Activated naive CD4-positive, alpha-beta T cell treated with anti-CD3 and anti-CD28 coated beads for 36 hours (primary cell): ENCODE measurements at regions of chr11 and their contacts with region 1.

Region 1: DNA sequence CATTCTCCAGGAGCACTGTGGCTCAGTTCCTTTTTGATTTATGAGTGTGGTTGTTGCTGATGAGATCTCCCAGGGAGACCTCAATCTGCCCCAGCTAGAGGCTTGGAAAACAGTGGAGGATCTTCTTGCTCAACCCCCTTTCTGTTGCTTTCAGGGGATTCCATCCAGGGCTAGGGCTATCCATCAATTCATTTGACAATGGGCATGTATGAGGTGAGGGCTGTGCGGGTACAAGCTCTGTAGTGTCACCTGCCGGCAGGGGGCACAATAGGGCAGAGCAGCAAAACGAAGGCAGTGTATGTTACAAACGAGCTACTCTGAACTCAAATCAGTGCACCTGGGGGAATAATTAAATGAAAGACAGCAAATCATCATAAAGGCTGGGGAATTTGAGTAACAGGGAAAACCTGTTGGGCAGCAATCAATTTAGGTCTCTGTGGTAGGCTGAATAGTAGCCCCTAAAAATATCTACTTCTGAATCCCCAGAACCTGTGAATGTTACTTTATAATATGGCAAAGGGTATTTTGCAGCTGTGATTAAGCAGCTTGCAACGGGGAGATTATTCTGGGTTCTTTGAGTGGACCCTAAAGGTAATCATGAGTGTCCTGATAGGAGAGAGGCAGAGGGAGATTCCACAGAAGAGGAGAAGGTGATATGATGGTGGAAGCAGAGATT is 170.3 kb upstream of the ZBED5 start:
- DNase-seq: peak; percentile 88
- H3K4me3 Mint-ChIP-seq: no peak overlapping the region
- H3K27ac Mint-ChIP-seq: no peak overlapping the region
- H3K4me1 Mint-ChIP-seq: no peaks in the 10 kb centered on the region
- H3K27me3 Mint-ChIP-seq: no peaks in the 10 kb centered on the region

Region 2: GRCh38 chr11:11016068-11016467 is 12.1 kb before region 1 on chr11:
- CTCF ChIA-PET with region 1: interaction called, 17 read pairs
- intact Hi-C with region 1: no loop called
- DNase-seq: no peak
- H3K4me3 Mint-ChIP-seq: no peak overlapping the region
- H3K27ac Mint-ChIP-seq: no peak overlapping the region
- H3K4me1 Mint-ChIP-seq: no peaks in the 10 kb centered on the region
- H3K27me3 Mint-ChIP-seq: peaks cover under 1% of the 10 kb centered on the region

Region 3: GRCh38 chr11:11157185-11157584 is 129.0 kb after region 1 on chr11:
- CTCF ChIA-PET with region 1: interaction called, 36 read pairs
- intact Hi-C with region 1: loop called (anchors 1 kb)
- DNase-seq: peak; percentile 66
- H3K4me3 Mint-ChIP-seq: no peak overlapping the region
- H3K27ac Mint-ChIP-seq: no peak overlapping the region
- H3K4me1 Mint-ChIP-seq: peaks cover 28% of the 10 kb centered on the region
- H3K27me3 Mint-ChIP-seq: no peaks in the 10 kb centered on the region

Region 4: GRCh38 chr11:11207428-11207827 is 179.3 kb after region 1 on chr11:
- CTCF ChIA-PET with region 1: no interaction called
- intact Hi-C with region 1: loop called (anchors 2 kb)
- DNase-seq: no peak
- H3K4me3 Mint-ChIP-seq: no peak overlapping the region
- H3K27ac Mint-ChIP-seq: no peak overlapping the region
- H3K4me1 Mint-ChIP-seq: no peaks in the 10 kb centered on the region
- H3K27me3 Mint-ChIP-seq: peaks cover 5% of the 10 kb centered on the region

Region 5: GRCh38 chr11:11265994-11266606 is 237.9 kb after region 1 on chr11:
- CTCF ChIA-PET with region 1: interaction called, 14 read pairs
- intact Hi-C with region 1: loop called (anchors 1 kb)
- DNase-seq: peak; percentile 79
- H3K4me3 Mint-ChIP-seq: no peak overlapping the region
- H3K27ac Mint-ChIP-seq: no peak overlapping the region
- H3K4me1 Mint-ChIP-seq: no peaks in the 10 kb centered on the region
- H3K27me3 Mint-ChIP-seq: no peaks in the 10 kb centered on the region

Region 6: DNA sequence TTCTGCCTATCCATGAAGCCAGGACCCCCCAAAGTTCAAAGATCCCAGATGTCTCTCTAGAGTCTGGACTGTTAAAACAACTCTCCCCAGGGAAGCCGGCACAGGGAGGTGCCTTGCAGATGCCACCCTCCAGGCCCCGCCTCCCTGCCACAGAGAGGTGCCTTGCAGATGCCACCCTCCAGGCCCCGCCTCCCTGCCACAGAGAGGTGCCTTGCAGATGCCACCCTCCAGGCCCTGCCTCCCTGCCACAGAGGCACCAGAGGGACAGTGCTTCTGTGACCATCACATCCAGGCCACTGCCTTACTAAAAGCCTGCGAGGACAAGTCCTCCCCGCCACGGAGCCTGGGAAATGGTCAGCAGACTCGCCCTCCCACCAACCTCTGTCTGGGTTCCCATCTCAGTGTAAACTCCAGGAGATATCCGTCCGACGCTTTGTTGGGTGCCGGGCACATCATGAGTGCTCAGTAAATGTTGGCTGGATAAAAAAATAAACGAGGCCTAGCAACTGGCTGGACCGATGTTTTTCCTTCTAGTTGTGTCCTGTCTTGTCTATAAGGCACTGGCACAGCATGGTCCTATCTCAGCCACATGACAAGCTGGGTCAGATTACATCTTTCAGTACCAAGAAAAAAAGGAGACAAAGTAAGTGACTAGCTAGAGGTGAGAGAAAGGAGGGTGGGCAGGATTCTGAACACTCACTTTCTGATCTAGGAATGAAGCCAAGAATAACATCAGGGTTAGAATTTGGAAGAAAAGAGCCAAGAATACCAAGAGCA is 416.1 kb after region 1 on chr11:
- CTCF ChIA-PET with region 1: no interaction called
- intact Hi-C with region 1: no loop called
- DNase-seq: no peak
- H3K4me3 Mint-ChIP-seq: no peak overlapping the region
- H3K27ac Mint-ChIP-seq: no peak overlapping the region
- H3K4me1 Mint-ChIP-seq: no peaks in the 10 kb centered on the region
- H3K27me3 Mint-ChIP-seq: no peaks in the 10 kb centered on the region

Region 7: GRCh38 chr11:11621573-11622319 is 593.6 kb after region 1 on chr11 and contains the start of gene GALNT18:
- CTCF ChIA-PET with region 1: interaction called, 5 read pairs
- intact Hi-C with region 1: loop called (anchors 10 kb)
- DNase-seq: peak; percentile 88
- H3K4me3 Mint-ChIP-seq: peak within 1 kb of the TSS; percentile 74
- H3K27ac Mint-ChIP-seq: no peak within 1 kb of the TSS
- H3K4me1 Mint-ChIP-seq: no peaks in the 10 kb centered on the region
- H3K27me3 Mint-ChIP-seq: peaks cover 48% of the 10 kb centered on the region
- total RNA-seq, gene GALNT18: 4.3 to 4.7 TPM